ENCODE measurements at regions of chr2 and their contacts with region 1.

Region 1: DNA sequence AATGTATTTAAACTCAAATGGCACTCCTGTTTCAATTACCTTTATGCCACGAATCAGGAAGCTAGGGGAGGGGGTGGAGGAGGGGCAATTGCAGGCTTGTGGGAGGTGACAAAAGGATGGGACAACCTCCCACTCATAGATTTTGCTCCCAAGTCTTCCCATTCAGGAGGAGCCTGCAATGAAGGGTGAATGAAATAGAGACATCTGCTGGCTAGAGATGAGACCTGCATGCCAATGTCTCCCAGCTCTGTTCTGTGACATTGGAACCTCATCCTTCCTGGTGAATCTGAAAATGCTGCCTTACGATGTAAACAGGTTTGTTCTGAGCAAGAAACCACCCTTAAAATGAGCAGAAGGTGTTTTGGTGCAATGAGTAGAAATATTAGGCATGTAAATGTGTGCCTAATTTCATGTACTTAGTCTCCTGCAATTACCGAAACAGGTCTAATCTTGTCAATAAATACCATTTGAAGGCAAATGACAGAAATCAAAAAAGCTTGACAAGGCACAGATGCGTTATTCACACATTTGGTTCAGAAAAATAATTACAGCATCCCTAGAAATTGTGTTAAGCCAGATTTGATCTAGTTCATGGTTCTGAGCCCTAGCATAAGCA is 2.7 kb upstream of the PID1 start:
- DNase-seq: peak; percentile 94
- H3K4me3 Mint-ChIP-seq: peak overlapping the region; percentile 57
- H3K27ac Mint-ChIP-seq: peak overlapping the region; percentile 41
- H3K4me1 Mint-ChIP-seq: peaks cover 40% of the 10 kb centered on the region
- H3K27me3 Mint-ChIP-seq: no peaks in the 10 kb centered on the region
- CTCF ChIP-seq: peak; percentile 66

Region 2: DNA sequence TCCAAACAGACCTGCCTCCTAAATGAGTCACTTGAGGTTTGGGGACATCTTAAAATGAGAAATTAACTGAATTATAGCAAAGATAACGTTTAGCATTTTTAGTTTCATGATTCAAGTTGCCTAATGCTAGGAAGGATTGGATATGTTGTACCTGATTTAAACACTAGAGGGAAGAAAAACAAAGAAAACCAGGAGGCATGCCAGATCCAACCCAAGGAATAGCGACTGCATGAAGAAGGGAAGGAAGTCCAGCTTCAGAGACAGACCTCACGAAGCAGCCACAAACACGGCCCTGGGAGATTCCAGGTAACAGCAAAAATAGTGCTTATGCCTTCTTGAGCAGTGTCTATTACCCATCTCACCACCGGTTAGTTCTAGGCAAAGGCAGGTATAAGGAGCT is 592.4 kb before region 1 on chr2:
- CTCF ChIA-PET with region 1: interaction called, 26 read pairs
- POLR2A ChIA-PET with region 1: no interaction called
- intact Hi-C with region 1: loop called (anchors 5 kb)
- DNase-seq: peak; percentile 67
- H3K4me3 Mint-ChIP-seq: no peak overlapping the region
- H3K27ac Mint-ChIP-seq: no peak overlapping the region
- H3K4me1 Mint-ChIP-seq: peaks cover 7% of the 10 kb centered on the region
- H3K27me3 Mint-ChIP-seq: no peaks in the 10 kb centered on the region
- CTCF ChIP-seq: peak; percentile 65

Region 3: GRCh38 chr2:229133155-229133772 is 140.6 kb before region 1 on chr2:
- CTCF ChIA-PET with region 1: interaction called, 248 read pairs
- POLR2A ChIA-PET with region 1: interaction called, 11 read pairs
- intact Hi-C with region 1: loop called (anchors 1 kb)
- DNase-seq: peak; percentile 76
- H3K4me3 Mint-ChIP-seq: no peak overlapping the region
- H3K27ac Mint-ChIP-seq: no peak overlapping the region
- H3K4me1 Mint-ChIP-seq: peaks cover 11% of the 10 kb centered on the region
- H3K27me3 Mint-ChIP-seq: no peaks in the 10 kb centered on the region
- CTCF ChIP-seq: peak; percentile 57

Region 4: GRCh38 chr2:229252996-229253395 is 20.8 kb before region 1 on chr2:
- CTCF ChIA-PET with region 1: interaction called, 7 read pairs
- POLR2A ChIA-PET with region 1: interaction called, 15 read pairs
- intact Hi-C with region 1: no loop called
- DNase-seq: no peak
- H3K4me3 Mint-ChIP-seq: no peak overlapping the region
- H3K27ac Mint-ChIP-seq: no peak overlapping the region
- H3K4me1 Mint-ChIP-seq: peaks cover 28% of the 10 kb centered on the region
- H3K27me3 Mint-ChIP-seq: no peaks in the 10 kb centered on the region
- CTCF ChIP-seq: no peak

Region 5: GRCh38 chr2:229445019-229445418 is 171.2 kb after region 1 on chr2:
- CTCF ChIA-PET with region 1: interaction called, 3 read pairs
- POLR2A ChIA-PET with region 1: no interaction called
- intact Hi-C with region 1: loop called (anchors 5 kb)
- DNase-seq: peak; percentile 96
- H3K4me3 Mint-ChIP-seq: peak overlapping the region; percentile 59
- H3K27ac Mint-ChIP-seq: peak overlapping the region; percentile 100
- H3K4me1 Mint-ChIP-seq: peaks cover 45% of the 10 kb centered on the region
- H3K27me3 Mint-ChIP-seq: no peaks in the 10 kb centered on the region
- CTCF ChIP-seq: no peak

Region 6: DNA sequence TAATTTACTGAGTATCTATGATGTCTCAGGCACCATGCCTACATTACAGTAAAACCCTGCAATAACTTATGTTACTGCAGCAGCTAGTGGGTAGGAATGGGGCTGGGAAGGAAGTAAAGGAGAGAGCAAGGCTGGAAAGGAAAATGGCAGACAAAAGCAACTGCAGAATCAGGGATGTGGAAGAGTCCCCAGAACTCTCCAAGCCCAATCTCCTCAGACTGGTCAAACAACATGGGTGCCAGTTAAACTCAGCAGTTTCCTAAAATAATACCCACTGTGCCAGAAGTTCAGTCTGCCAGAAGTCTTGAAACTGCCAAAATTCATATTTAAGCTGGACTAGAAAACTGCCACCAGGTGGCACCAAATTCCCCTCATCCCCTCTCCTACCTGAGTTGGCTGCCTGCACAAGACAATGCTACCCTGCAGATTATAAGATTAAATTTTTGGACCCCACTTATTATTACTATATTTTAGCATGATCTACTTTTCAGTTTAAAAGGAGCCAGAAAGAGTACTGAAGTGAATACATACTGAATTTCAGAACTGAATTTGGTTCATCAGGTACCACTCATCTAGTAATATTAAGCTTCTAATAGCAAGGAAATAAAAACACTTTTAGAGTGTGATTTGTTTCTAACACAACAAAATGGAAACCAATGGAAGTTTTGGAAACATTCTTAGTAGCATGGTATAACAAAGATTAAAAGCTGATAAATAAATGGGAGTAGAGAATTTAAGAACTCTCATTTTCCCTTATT is 527.3 kb after region 1 on chr2:
- CTCF ChIA-PET with region 1: no interaction called
- POLR2A ChIA-PET with region 1: no interaction called
- intact Hi-C with region 1: no loop called
- DNase-seq: peak; percentile 79
- H3K4me3 Mint-ChIP-seq: no peak overlapping the region
- H3K27ac Mint-ChIP-seq: no peak overlapping the region
- H3K4me1 Mint-ChIP-seq: peaks cover 9% of the 10 kb centered on the region
- H3K27me3 Mint-ChIP-seq: no peaks in the 10 kb centered on the region
- CTCF ChIP-seq: peak; percentile 65